ENCODE measurements at regions of chr13 and their contacts with region 1.

Region 1: GRCh38 chr13:77492982-77493381 is 42.5 kb upstream of the SCEL start:
- DNase-seq: no peak
- ATAC-seq: peak in 1 of 4 donors; percentile 50
- H3K4me3 ChIP-seq: no peak overlapping the region
- H3K27ac ChIP-seq: no peak overlapping the region
- H3K4me1 ChIP-seq: no peaks in the 10 kb centered on the region
- H3K27me3 ChIP-seq: no peaks in the 10 kb centered on the region
- CTCF ChIP-seq: peak; percentile 46

Region 2: DNA sequence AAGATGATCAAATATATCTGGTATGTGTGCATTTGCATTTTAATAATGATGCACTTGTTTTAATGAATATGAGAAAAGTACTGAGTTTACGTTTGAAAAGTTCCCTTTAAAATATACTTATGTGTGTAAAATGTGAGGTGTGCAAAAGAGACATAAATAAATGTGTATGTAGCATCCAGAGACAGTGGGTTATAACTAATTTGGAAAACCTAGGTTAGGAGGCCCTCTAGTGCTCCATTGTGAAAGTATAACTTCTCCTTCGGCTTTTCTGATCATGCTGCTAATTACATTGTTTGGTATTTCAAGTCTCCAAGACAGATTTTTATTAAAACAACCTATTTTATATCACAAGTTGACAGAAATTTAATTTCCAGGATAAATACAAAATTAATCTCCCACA is 72.7 kb after region 1 on chr13:
- intact Hi-C with region 1: loop called in 1 of 2 experiments (anchors 5 kb)
- DNase-seq: no peak
- ATAC-seq: no peak
- H3K4me3 ChIP-seq: no peak overlapping the region
- H3K27ac ChIP-seq: no peak overlapping the region
- H3K4me1 ChIP-seq: no peaks in the 10 kb centered on the region
- H3K27me3 ChIP-seq: no peaks in the 10 kb centered on the region
- CTCF ChIP-seq: peak; percentile 28

Region 3: GRCh38 chr13:77751513-77752456 is 258.8 kb after region 1 on chr13:
- intact Hi-C with region 1: loop called (anchors 5 to 10 kb)
- DNase-seq: no peak
- ATAC-seq: peak; percentile 42 to 84 (median 56)
- H3K4me3 ChIP-seq: no peak overlapping the region
- H3K27ac ChIP-seq: no peak overlapping the region
- H3K4me1 ChIP-seq: no peaks in the 10 kb centered on the region
- H3K27me3 ChIP-seq: no peaks in the 10 kb centered on the region
- CTCF ChIP-seq: peak; percentile 73